Activated CD8-positive, alpha-beta T cell treated with anti-CD3 and anti-CD28 coated beads, Interleukin-2, amount 10 ng/mL, durations not matched to agents 7 days and 5 days (primary cell): ENCODE measurements at regions of chr21 and their contacts with region 1.

Region 1: DNA sequence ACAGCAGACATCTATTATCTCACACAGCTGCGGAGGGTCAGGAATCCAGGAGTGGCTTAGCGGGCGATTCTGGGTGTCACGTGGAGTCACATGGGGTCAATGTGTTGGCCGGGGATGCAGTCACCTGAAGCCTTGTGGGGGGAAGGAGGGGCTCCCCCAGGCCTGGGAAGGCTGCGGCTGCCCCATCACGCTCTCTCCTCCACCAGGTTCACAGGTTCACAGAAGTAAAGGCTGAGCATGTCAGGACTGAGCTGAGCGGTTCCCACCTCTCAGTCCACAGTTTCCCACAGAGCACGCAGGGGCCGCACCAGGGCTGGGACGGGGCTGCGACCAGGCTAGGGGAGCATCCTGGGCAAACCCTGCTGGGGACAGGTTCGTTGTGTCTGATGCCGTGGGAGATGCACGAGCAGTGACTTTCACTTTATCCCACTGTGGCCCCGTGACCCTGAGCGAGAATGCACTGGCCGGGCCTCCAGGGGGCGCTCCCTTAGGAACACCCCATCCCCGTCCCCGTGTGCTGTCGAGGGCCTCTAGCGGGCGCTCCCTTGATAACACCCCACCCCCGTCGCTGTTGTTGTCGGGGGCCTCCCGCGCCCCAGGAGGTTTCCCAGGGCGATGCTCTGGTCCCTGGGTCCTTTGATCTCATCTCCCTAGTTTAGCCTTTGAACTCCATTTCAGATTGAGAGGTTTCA is 73.2 kb upstream of the TRAPPC10 start:
- DNase-seq: peak; percentile 94
- ATAC-seq: peak; percentile 99
- H3K4me3 Mint-ChIP-seq: peak overlapping the region; percentile 80
- H3K27ac Mint-ChIP-seq: peak overlapping the region; percentile 73
- H3K4me1 Mint-ChIP-seq: peaks cover 24% of the 10 kb centered on the region
- H3K27me3 Mint-ChIP-seq: no peaks in the 10 kb centered on the region

Region 2: DNA sequence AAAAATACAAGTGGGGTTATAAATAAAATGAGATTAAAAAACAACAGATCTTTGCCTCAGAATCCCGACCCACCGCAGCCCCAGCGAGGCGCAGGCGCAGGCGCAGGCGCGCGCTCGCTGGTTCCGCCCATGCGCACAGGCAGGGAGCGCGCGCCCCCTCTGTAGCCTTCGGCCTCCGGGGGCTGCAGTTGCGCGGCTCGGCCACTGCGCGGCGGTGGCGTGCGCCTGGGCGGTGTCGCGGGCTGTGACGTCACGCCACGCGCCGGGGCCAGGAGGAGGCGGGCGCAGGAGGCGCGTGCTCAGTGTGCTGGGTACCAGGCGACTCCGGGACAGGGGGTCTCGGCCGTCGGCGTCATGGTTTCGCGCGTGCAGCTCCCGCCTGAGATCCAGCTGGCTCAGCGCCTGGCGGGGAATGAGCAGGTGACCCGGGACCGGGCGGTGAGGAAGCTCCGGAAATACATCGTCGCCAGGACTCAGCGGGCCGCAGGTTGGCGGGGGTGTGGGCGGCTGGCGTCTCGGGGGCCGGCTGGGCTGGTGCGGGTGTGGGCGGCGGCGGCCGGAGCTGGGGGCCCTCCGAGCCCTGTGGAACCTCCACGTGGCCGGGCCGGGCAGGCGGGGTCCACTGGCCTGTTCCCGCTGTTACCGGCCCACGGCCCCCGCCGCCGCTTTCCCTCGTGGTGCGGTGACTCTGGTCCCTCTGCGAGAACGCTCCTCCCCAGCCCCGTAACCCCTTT is 149.5 kb before region 1 on chr21 and contains the start of gene RRP1:
- CTCF ChIA-PET with region 1: interaction called, 12 read pairs
- POLR2A ChIA-PET with region 1: no interaction called
- DNase-seq: peak; percentile 92
- ATAC-seq: peak; percentile 91
- H3K4me3 Mint-ChIP-seq: peak within 1 kb of the TSS; percentile 96
- H3K27ac Mint-ChIP-seq: peak within 1 kb of the TSS; percentile 92
- H3K4me1 Mint-ChIP-seq: peaks cover 24% of the 10 kb centered on the region
- H3K27me3 Mint-ChIP-seq: no peaks in the 10 kb centered on the region
- total RNA-seq, gene RRP1: 32.8 to 34.4 TPM

Region 3: DNA sequence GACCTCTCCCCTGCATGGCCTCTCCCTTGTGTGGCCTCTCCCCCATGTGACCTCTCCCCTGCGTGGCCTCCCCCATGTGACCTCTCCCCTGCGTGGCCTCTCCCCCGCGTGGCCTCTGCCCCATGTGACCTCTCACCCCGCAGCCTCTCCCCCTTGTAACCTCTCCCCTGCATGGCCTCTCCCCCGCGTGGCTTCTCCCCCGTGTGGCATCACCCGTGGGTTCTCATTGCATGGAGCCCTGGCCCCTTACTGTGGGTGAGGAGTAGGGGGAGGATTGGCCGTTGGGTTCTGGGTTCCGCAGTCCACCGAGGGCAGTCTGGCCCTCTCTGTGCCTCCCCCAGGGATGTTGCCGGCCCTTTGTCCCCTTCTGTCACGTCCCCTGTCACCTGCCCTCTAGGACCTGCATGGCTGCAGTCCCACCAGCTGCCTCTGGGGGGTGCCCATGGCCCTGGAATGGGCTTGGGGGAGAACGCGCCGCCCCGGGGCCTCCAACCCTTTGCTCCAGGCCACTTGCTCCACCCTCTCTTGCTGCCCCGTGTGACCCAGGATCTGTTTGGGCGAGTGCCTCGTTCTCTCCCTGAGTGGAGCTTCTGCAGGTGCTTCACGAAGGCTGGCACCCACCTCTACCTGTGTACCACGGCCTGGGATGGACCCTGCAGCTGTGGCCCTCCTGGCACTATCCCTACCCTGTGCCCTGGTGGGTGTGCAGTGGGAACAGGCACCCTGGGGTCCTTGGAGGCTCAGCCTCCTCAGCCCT is 128.2 kb before region 1 on chr21:
- CTCF ChIA-PET with region 1: interaction called, 10 read pairs
- POLR2A ChIA-PET with region 1: no interaction called
- DNase-seq: peak; percentile 93
- ATAC-seq: peak; percentile 90
- H3K4me3 Mint-ChIP-seq: no peak overlapping the region
- H3K27ac Mint-ChIP-seq: peak overlapping the region; percentile 52
- H3K4me1 Mint-ChIP-seq: peaks cover 16% of the 10 kb centered on the region
- H3K27me3 Mint-ChIP-seq: no peaks in the 10 kb centered on the region

Region 4: DNA sequence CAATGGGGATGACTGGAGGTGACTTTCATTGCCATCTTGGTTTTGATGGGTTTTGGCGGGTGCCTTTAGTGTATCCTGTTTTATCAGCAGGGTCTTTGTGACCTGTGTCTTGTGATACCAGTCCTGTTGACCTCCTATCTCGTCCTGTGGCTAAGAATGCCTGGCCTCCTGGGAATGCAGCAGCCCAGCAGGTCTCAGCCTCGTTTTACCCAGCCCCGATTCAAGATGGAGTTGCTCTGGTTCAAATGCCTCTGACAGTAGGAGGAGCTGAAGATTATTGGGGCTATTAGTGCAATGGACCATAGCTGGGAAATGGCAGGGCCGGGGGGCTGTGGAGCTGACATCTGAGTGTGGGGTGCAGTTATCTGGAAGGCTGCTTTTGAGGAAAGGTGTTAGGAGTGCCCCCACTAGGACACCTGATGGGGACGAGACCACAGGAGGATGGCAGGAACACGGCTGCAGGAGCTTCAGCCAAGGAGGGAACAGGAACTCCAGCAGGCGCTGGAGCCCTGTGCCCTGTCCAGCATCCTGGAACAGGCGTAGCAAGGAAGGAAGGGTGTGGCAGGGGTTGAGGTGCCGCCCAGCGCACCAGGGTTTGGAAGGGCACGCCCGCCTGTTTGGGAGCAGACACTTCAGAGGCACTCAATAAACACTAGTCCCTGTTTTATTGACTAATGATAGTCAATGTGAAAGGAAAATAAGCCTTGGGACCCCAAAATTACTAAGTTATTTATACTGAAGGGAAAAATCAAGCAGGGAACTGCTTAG is 89.2 kb before region 1 on chr21:
- CTCF ChIA-PET with region 1: no interaction called
- POLR2A ChIA-PET with region 1: no interaction called
- DNase-seq: no peak
- ATAC-seq: no peak
- H3K4me3 Mint-ChIP-seq: no peak overlapping the region
- H3K27ac Mint-ChIP-seq: peak overlapping the region; percentile 60
- H3K4me1 Mint-ChIP-seq: peaks cover 18% of the 10 kb centered on the region
- H3K27me3 Mint-ChIP-seq: no peaks in the 10 kb centered on the region

Region 5: GRCh38 chr21:43893536-43894205 is 45.2 kb before region 1 on chr21:
- CTCF ChIA-PET with region 1: interaction called, 20 read pairs
- POLR2A ChIA-PET with region 1: no interaction called
- DNase-seq: peak; percentile 38
- ATAC-seq: peak; percentile 73
- H3K4me3 Mint-ChIP-seq: peak overlapping the region; percentile 61
- H3K27ac Mint-ChIP-seq: peak overlapping the region; percentile 64
- H3K4me1 Mint-ChIP-seq: peaks cover 41% of the 10 kb centered on the region
- H3K27me3 Mint-ChIP-seq: no peaks in the 10 kb centered on the region

Region 6: DNA sequence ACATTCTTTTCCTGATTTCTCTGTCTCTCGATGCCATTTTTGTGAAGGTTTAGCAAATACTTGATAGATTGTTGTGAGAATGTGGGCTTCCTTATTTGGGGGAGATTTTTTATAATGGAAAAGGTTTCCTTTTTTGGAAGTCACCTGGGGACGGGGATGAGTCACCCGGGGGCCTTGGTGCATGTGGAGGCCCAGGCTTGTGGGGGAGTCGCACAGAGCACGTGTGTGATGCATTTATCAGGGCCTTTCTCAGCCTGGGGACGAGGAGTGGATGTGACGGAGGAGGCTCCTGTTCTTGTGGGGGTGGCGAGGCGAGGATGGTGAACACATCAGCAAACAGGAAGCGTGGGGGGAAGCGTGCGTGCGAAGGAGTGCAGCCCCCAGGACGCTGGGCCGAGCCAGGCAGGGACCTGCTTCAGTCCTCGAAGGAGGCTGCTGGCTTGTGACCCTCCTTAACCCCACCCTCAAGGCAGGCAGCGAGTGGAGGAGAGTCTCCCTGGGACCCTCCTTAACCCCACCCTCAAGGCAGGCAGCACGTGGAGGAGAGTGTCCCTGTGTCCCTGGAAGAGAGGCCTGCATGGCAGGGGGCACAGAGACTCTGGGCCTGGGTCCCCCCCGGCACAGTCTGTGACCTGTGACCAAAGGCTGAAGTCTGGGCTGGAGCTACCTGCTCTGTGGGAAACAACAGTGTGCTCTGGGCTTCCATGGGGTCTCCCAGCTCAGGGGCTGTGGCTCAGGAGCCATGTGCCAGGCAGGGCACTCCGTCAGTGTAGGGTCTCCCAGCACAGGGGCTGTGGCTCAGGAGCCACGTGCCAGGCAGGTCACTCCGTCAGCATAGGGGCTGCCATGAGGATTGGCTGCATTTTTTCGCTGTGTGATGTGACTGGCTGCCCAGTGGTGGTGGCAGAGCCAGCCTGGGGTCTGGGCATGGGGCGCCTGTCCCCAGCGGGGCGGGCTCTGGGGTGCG is 16.6 kb before region 1 on chr21:
- CTCF ChIA-PET with region 1: interaction called, 21 read pairs
- POLR2A ChIA-PET with region 1: interaction called, 4 read pairs
- DNase-seq: peak; percentile 77
- ATAC-seq: peak; percentile 59
- H3K4me3 Mint-ChIP-seq: peak overlapping the region; percentile 62
- H3K27ac Mint-ChIP-seq: peak overlapping the region; percentile 87
- H3K4me1 Mint-ChIP-seq: peaks cover 60% of the 10 kb centered on the region
- H3K27me3 Mint-ChIP-seq: peaks cover 2% of the 10 kb centered on the region

Region 7: DNA sequence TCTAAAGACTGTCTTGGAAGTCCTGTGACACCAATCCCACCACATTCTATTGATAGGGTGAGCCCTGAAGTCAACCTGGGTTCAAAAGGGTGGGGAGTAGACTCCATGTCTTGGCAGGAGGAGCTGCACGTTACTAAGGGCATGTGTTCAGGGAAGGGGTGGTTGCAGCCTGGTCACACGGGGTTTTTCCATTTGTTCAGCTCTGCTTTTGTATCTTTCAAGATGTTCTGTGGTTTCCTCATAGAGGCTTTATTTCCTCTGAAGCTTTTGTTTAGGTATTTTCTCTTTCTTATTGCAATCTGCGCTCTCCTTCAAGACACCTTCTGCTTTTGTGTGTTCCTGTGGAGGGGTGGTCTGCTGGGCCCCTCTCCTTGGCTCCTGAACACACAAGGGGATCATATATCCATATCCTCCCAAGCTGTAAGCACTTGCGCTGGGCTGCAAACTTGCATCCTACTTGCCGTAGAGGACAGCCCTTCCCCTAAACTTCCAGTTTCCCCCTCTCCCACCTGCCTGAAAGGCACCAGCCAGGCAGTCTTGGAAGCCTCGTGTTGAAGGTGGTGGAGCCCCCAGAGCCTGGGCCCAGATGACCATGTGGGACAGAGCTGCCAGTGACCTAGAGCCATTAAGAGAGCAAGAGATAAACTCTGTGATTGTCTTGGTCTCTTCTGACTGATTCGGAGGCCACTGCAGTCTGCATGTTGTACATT is 10.8 kb after region 1 on chr21:
- CTCF ChIA-PET with region 1: interaction called, 15 read pairs
- POLR2A ChIA-PET with region 1: no interaction called
- DNase-seq: no peak
- ATAC-seq: peak; percentile 33
- H3K4me3 Mint-ChIP-seq: no peak overlapping the region
- H3K27ac Mint-ChIP-seq: peak overlapping the region; percentile 77
- H3K4me1 Mint-ChIP-seq: peaks cover 12% of the 10 kb centered on the region
- H3K27me3 Mint-ChIP-seq: no peaks in the 10 kb centered on the region